ENCODE measurements at regions of chr19 and their contacts with region 1.

Region 1: GRCh38 chr19:20999731-21000352 is 20.6 kb upstream of the ZNF430 start:
- DNase-seq: peak; percentile 84
- ATAC-seq: peak; percentile 99
- H3K4me3 Mint-ChIP-seq: peak overlapping the region; percentile 95
- H3K27ac Mint-ChIP-seq: peak overlapping the region; percentile 97
- H3K4me1 Mint-ChIP-seq: peaks cover 13% of the 10 kb centered on the region
- H3K27me3 Mint-ChIP-seq: no peaks in the 10 kb centered on the region

Region 2: GRCh38 chr19:20565321-20566018 is 434.4 kb before region 1 on chr19 and contains the start of gene ZNF737:
- POLR2A ChIA-PET with region 1: interaction called, 11 read pairs
- DNase-seq: peak; percentile 86
- ATAC-seq: peak; percentile 97
- H3K4me3 Mint-ChIP-seq: peak within 1 kb of the TSS; percentile 98
- H3K27ac Mint-ChIP-seq: peak within 1 kb of the TSS; percentile 98
- H3K4me1 Mint-ChIP-seq: peaks cover 6% of the 10 kb centered on the region
- H3K27me3 Mint-ChIP-seq: no peaks in the 10 kb centered on the region
- total RNA-seq, gene ZNF737: 30.9 to 33.8 TPM

Region 3: DNA sequence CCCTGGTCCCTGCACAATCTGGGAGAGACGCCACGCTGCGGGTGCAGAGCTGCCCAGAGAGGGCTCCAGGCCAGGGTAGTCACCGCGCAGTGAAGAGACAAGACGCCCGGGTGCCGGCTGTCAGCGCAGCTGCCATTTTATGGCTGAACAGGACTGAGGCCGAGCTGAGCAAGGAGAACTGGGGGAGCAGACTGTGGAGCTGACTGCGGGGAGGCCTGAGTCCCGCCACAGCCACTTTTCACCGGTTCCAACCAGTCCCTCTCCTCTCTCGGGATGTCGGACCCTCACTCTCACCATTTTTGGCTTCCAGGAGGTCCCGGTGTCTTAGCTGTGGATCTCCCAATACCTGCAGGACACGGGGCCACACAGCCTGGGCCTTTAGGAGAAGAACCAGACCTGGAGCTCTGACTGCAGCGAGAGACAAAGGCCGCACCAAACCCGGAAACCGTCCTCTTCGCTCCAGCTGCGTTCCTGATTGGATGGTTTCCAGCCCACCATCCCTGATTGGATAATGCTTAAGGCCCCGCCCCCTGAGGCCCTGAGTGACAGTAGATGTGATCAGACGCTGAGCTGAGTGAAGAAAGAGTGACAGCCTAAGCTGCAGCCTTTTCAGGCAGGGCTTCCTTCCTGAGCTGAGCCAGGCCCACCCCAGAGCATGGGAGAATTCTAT is 338.6 kb before region 1 on chr19 and contains the start of gene ZNF626:
- POLR2A ChIA-PET with region 1: interaction called, 10 read pairs
- DNase-seq: peak; percentile 85
- ATAC-seq: peak; percentile 99
- H3K4me3 Mint-ChIP-seq: peak within 1 kb of the TSS; percentile 94
- H3K27ac Mint-ChIP-seq: peak within 1 kb of the TSS; percentile 98
- H3K4me1 Mint-ChIP-seq: peaks cover 10% of the 10 kb centered on the region
- H3K27me3 Mint-ChIP-seq: no peaks in the 10 kb centered on the region
- total RNA-seq, gene ZNF626: 13.6 to 17.8 TPM

Region 4: DNA sequence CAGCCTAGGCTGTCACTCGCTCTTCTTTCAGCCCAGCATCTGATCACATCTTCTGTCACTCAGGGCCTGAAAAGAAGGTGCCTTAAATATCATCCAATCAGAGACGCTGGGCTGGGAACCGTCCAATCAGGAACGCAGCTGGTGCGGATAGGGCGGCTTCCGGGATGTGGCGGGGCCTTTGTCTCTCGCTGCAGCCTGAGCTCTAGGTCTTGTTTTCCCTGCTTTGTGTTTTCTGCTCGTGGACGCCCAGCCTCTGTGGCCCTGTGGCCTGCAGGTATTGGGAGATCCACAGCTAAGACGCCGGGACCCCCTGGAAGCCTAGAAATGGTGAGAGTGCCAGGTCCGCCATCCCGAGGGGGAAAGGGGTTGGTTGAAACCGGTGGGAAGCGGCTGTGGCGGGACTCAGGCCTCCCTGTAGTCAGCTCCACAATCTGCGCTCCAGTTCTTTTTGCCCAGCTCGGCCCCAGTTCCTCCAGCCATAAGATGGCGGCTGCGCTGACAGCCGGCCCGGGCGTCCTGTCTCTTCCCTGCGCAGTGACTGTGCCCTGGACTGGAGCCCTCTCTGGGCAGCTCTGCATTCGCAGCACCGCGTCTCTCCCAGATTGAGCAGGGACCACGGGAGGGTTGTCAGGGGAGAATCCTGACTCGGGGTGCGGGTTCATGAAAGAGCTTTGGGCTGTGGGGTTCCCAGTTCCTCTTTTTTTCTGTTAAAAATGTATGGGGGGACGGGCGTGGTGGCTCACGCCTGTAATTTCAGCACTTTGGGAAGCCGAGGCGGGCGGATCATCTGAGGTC is 76.6 kb before region 1 on chr19 and contains the start of gene ZNF85:
- POLR2A ChIA-PET with region 1: interaction called, 26 read pairs
- DNase-seq: peak; percentile 85
- ATAC-seq: peak; percentile 99
- H3K4me3 Mint-ChIP-seq: peak within 1 kb of the TSS; percentile 97
- H3K27ac Mint-ChIP-seq: peak within 1 kb of the TSS; percentile 99
- H3K4me1 Mint-ChIP-seq: peaks cover 13% of the 10 kb centered on the region
- H3K27me3 Mint-ChIP-seq: no peaks in the 10 kb centered on the region
- total RNA-seq, gene ZNF85: 22.7 to 25.0 TPM

Region 5: GRCh38 chr19:21020298-21021227 is 20.7 kb after region 1 on chr19 and contains the start of gene ZNF430:
- POLR2A ChIA-PET with region 1: interaction called, 36 read pairs
- DNase-seq: peak; percentile 83
- ATAC-seq: peak; percentile 97
- H3K4me3 Mint-ChIP-seq: peak within 1 kb of the TSS; percentile 99
- H3K27ac Mint-ChIP-seq: peak within 1 kb of the TSS; percentile 100
- H3K4me1 Mint-ChIP-seq: peaks cover 24% of the 10 kb centered on the region
- H3K27me3 Mint-ChIP-seq: no peaks in the 10 kb centered on the region
- total RNA-seq, gene ZNF430: 33.9 to 35.0 TPM

Region 6: DNA sequence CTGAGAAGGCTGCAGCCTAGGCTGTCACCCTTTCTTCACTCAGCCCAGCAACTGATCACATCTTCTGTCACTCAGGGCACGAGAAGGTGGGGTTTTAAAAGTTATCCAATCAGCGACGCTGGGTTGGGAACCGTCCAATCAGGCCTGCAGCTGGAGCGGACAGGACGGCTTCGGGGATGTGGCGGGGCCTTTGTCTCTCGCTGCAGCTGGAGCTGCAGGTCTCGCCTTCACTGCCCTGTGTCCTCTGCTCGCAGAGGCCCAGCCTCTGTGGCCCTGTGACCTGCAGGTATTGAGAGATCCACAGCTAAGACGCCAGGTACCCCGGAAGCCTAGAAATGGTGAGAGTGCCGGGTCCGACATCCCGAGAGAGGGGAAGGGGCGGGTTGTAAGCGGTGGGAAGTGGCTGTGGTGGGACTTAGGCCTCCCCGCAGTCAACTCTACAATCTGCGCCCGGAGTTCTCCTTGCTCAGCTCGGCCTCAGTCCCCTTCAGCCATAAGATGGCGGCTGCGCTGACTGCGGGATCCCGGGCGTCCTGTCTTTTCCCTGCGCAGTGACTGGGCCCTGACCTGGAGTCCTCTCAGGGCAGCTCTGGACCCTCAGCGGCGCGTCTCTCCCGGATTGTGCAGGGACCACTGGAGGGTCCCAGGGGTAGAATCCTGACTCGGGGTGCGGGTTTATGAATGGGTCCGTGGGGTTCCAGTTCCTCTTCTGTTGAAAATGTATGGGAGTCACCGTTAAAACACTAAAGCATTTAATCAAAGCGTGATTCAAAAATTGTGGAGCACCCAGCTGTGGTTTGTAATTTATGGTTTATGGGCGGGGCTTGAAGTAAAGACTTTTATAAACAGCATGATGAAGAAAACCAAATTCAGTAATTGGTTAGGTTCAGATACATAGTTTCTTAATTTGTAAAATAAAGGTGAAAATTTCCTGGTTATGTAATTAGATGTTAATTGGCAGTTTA is 82.5 kb after region 1 on chr19 and contains the start of gene ZNF714:
- POLR2A ChIA-PET with region 1: interaction called, 15 read pairs
- DNase-seq: peak; percentile 79
- ATAC-seq: peak; percentile 99
- H3K4me3 Mint-ChIP-seq: peak within 1 kb of the TSS; percentile 100
- H3K27ac Mint-ChIP-seq: peak within 1 kb of the TSS; percentile 99
- H3K4me1 Mint-ChIP-seq: peaks cover 13% of the 10 kb centered on the region
- H3K27me3 Mint-ChIP-seq: no peaks in the 10 kb centered on the region
- total RNA-seq, gene ZNF714: 25.1 to 26.6 TPM

Region 7: DNA sequence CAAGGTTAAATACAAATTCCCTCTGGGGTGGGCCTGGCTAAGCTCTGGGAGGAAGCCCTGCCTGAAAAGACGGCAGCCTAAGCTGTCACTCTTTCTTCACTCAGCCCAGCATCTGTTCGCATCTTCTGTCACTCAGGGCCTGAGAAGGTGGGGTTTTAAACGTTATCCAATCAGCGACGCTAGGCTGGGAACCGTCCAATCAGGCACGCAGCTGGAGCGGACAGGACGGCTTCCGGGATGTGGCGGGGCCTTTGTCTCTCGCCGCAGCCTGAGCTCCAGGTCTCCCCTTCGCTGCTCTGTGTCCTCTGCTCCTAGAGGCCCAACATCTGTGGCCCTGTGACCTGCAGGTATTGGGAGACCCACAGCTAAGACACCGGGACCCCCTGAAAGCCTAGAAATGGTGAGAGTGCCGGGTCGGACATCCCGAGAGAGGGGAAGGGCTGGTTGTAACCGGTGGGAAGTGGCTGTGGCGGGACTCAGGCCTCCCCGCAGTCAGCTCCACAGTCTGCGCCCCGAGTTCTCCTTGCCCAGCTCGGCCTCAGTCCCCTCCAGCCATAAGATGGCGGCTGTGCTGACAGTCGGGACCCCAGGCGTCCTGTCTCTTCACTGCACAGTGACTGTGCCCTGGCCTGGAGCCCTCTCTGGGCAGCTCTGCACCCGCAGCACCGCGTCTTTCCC is 142.1 kb after region 1 on chr19 and contains the start of gene ZNF431:
- POLR2A ChIA-PET with region 1: interaction called, 16 read pairs
- DNase-seq: peak; percentile 84
- ATAC-seq: peak; percentile 99
- H3K4me3 Mint-ChIP-seq: peak within 1 kb of the TSS; percentile 96
- H3K27ac Mint-ChIP-seq: peak within 1 kb of the TSS; percentile 97
- H3K4me1 Mint-ChIP-seq: peaks cover 15% of the 10 kb centered on the region
- H3K27me3 Mint-ChIP-seq: no peaks in the 10 kb centered on the region
- total RNA-seq, gene ZNF431: 21.5 to 28.2 TPM

Region 8: DNA sequence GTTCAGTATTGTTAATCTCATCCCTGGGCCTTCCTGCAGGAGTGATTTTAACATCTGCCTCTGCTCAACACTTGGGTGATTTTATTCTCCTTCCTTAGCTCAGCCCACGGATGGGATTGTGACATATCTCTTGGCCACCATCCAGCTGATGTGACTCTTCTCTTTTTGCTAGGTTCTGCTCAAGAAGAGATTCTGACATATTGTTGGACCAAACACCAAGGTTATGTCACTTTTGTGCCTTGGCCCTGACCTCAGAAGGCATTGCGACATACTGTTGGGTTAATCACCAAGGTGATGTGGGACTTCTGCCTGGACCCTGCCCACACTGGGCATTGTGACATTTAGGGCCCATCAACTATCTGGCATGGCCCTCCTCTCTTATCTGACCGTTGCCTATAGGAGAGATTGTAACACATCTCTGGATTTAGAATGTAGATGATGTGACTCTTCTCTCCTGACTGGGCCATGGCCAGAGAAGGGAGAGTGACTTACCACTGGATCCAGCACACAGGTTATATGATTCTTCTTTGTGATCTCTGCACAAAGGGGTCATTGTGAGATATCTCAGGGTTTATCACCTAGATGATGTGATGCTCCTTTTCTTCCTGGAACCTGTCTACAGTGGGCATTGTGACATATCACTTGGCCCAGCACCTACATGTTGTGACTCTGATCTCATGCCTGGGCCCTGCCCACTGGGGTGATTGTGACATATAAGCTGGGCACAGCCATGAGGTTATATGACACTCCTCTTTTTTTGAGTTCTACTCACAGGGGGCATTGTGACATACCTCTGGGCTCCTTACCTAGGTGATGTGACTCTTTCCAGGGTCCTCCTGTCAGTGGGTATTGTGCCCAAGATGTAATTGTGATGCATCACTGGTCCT is 594.3 kb after region 1 on chr19:
- POLR2A ChIA-PET with region 1: no interaction called
- DNase-seq: no peak
- ATAC-seq: no peak
- H3K4me3 Mint-ChIP-seq: no peak overlapping the region
- H3K27ac Mint-ChIP-seq: no peak overlapping the region
- H3K4me1 Mint-ChIP-seq: no peaks in the 10 kb centered on the region
- H3K27me3 Mint-ChIP-seq: peaks cover 1% of the 10 kb centered on the region